Colonic mucosa (tissue), 4 donors: ENCODE measurements at regions of chr15 and their contacts with region 1.

Region 1: GRCh38 chr15:88701561-88702095 is 62.8 kb downstream of the ISG20 start:
- DNase-seq: no peak
- H3K4me3 ChIP-seq: no peak overlapping the region
- H3K27ac ChIP-seq: no peak overlapping the region
- H3K4me1 ChIP-seq: no peaks in the 10 kb centered on the region
- H3K27me3 ChIP-seq: peaks cover 6% of the 10 kb centered on the region
- CTCF ChIP-seq: no peak

Region 2: DNA sequence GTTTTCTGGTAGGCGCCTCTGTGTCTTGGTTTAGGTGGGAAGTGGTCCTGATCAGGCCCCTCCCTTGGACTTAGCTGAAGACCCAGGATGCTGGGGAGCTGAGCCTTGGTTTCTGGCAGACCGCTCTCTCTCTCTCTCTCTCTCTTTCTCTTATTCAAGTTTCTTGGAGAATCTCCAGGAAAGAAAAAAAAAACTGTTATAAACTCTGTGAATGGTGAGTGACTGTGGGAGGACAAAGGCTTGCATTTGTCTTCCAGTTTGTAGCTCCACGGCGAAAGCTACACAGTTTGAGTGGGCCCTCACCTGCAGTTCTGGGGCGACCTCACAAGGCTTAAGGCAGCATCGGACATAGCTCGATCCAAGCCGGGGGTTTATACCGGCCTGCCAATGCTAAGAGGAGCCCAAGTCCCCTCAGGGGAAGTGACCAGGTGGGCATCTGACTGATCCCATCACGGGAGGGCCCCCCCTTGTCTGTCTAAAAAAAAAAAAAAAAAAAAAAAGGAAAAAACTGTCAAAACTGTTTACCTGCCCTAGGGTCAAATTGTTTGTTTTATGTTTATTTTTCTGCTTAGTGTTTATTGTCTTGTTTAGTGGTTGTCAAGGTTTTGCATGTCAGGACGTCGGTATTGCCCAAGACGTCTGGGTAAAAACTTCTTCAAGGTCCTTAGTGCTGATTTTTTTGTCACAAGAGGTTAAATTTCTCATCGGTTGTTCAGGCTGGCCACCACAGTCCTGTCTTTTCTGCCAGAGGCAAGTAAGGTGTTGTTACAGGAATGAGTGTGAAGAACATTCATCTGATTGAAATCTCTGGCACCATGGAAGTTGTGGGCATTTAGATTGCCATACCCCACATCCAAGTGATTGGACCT is 162.4 kb before region 1 on chr15:
- intact Hi-C with region 1: no loop called
- DNase-seq: no peak
- H3K4me3 ChIP-seq: no peak overlapping the region
- H3K27ac ChIP-seq: no peak overlapping the region
- H3K4me1 ChIP-seq: no peaks in the 10 kb centered on the region
- H3K27me3 ChIP-seq: no peaks in the 10 kb centered on the region
- CTCF ChIP-seq: no peak

Region 3: GRCh38 chr15:88620995-88621772 is 80.4 kb before region 1 on chr15 and contains the start of gene AEN:
- intact Hi-C with region 1: loop called (anchors 10 kb)
- DNase-seq: peak; percentile 96
- H3K4me3 ChIP-seq: peak within 1 kb of the TSS; percentile 98
- H3K27ac ChIP-seq: peak within 1 kb of the TSS; percentile 70
- H3K4me1 ChIP-seq: peaks cover 15% of the 10 kb centered on the region
- H3K27me3 ChIP-seq: no peaks in the 10 kb centered on the region
- CTCF ChIP-seq: no peak
- total RNA-seq, gene AEN: 13.8 to 23.8 TPM